H1 (cell line): ENCODE measurements at regions of chr16 and their contacts with region 1.

Region 1: GRCh38 chr16:86519649-86520316 is 9.5 kb downstream of the FOXF1 start:
- DNase-seq: peak in 1 of 2 experiments; percentile 87
- H3K4me3 ChIP-seq: no peak overlapping the region
- H3K27ac ChIP-seq: no peak overlapping the region
- H3K4me1 ChIP-seq: peaks cover 3 to 9% (median 5%) of the 10 kb centered on the region in 4 experiments; a peak in 6 of 7 replicates
- H3K27me3 ChIP-seq: peaks cover 41 to 55% (median 47%) of the 10 kb centered on the region in 4 experiments
- CTCF ChIP-seq: peak; percentile 79 to 88 (median 83)
- EP300 ChIP-seq: no peak
- POLR2A ChIP-seq: no peak
- RAD21 ChIP-seq: peak; percentile 86 to 90

Region 2: DNA sequence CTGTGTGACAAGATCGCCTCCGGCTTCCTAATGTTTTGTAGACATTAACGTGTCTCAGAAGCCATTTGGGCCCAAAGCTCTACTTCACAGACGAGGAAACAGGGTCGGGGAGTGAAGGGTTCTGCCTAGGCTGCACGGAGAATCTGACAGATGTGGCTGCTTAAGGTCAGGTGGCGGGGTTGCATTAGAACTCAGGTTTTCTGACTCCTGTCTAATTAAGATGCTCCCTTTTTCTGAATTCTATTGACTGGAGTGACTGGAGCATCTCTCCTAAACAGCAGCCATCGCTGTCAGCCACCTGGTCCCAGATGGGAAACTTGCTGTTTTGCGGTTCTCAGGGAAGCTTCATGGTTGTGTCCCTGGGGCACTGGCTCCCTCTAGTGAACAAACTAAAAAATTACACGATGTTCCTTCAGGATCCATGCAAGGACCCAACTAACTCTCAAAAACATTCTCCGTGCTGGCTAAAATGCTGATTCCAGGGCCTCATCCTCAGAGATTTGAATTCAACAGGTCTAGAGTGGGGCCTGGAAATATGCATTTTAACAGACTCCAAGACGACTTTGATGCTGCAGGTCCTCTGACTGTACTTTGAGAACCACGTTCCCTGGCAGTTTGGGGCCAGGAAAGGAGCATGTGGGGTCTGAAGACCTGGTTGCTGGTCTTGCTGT is 503.4 kb before region 1 on chr16:
- CTCF ChIA-PET with region 1: interaction called, 14 read pairs
- POLR2A ChIA-PET with region 1: no interaction called
- DNase-seq: peak; percentile 17 to 55
- H3K4me3 ChIP-seq: no peak overlapping the region
- H3K27ac ChIP-seq: no peak overlapping the region
- H3K4me1 ChIP-seq: no peaks in the 10 kb centered on the region
- H3K27me3 ChIP-seq: no peaks in the 10 kb centered on the region; a peak in 3 of 7 replicates
- CTCF ChIP-seq: peak; percentile 37 to 86 (median 80)
- EP300 ChIP-seq: no peak
- POLR2A ChIP-seq: no peak
- RAD21 ChIP-seq: peak; percentile 94 to 96

Region 3: GRCh38 chr16:86044241-86044671 is 475.5 kb before region 1 on chr16:
- CTCF ChIA-PET with region 1: interaction called, 84 read pairs
- POLR2A ChIA-PET with region 1: no interaction called
- DNase-seq: peak; percentile 46 to 93
- H3K4me3 ChIP-seq: no peak overlapping the region
- H3K27ac ChIP-seq: no peak overlapping the region
- H3K4me1 ChIP-seq: peaks cover 0 to 1% (median 0%) of the 10 kb centered on the region in 4 experiments; a peak in 1 of 7 replicates
- H3K27me3 ChIP-seq: no peaks in the 10 kb centered on the region; a peak in 1 of 7 replicates
- CTCF ChIP-seq: peak; percentile 87 to 97 (median 94)
- EP300 ChIP-seq: no peak
- POLR2A ChIP-seq: no peak
- RAD21 ChIP-seq: peak; percentile 71 to 78

Region 4: DNA sequence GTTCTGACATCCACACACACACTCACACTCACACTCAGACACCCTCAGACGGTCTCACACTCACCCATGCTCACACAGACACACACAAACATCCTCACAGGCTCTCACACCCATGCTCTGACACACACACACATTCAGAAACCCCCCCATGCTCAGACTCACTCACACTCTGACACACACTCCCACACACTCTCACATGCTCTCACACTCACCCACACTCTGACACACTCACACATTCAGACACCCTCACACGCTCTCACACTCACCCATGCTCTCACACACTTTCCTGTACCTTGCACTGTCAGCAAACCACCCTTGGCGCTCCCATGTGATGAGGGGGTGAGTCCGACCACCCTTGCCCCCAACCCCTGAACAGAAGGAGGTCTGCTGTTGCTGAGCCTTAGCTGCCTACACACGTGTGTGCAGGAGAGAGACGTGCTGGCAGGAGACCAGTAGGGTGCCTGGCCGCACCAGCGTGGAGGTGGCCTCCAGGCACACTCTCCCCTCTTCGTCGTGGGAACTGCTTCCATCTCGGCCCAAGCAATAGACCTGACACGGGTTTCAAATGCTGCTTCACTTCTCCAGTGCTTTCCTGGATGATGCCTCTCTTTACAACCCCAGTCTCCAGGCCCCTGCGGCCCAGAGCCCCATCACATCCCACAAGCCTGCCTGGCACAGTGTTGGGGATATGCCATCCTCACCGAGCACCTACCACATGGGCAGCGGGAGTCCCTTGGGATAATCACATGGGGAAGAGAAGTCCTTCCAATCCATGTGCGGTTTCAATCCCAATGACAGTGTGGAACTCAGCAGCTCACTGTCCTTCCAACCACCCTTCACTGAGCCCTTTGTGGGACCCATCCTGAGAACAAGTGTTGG is 277.3 kb before region 1 on chr16:
- CTCF ChIA-PET with region 1: interaction called, 14 read pairs
- POLR2A ChIA-PET with region 1: no interaction called
- DNase-seq: peak in 1 of 2 experiments; percentile 40
- H3K4me3 ChIP-seq: no peak overlapping the region
- H3K27ac ChIP-seq: no peak overlapping the region
- H3K4me1 ChIP-seq: peaks cover 0 to 15% (median 6%) of the 10 kb centered on the region in 4 experiments; a peak in 6 of 7 replicates
- H3K27me3 ChIP-seq: peaks cover 0 to 2% (median 0%) of the 10 kb centered on the region in 4 experiments; a peak in 1 of 7 replicates
- CTCF ChIP-seq: no peak
- EP300 ChIP-seq: no peak
- POLR2A ChIP-seq: no peak
- RAD21 ChIP-seq: no peak

Region 5: DNA sequence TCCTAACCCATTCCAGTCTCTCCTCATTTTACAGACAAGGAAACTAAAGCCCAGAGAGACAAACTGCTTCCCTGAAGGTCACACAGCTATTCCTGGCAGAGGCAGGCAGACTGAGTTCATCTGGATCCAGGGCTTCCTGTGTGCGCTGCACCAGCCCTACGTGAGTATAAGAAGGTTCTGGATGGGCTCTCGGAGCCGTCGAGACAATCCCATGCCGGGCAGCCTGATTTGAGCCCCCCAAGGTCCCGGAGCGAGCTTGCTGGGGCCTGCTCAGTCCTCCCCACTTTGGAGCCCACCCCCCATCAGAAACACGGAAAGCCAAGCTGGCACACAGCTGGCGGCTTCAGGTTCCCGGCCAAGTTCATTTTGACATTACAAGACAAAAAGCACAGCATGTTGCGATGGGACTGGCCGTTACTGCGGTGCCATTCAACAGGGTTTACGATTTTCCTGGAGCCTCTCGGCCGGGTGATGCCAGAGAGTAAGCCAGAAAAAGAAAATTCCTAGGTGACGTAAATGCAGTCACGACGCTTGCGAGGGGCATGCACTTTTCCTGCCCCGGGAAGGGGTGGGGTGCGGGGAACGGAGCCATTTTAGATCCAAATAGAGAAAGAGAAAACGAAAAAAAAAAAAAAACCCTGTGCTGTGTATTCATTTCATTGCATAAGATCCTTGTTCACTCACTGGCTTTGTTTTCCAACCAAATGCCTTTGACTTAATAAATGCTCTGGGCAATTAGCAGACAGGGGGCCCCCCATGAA is 176.6 kb before region 1 on chr16:
- CTCF ChIA-PET with region 1: interaction called, 17 read pairs
- POLR2A ChIA-PET with region 1: no interaction called
- DNase-seq: no peak
- H3K4me3 ChIP-seq: no peak overlapping the region
- H3K27ac ChIP-seq: no peak overlapping the region
- H3K4me1 ChIP-seq: peaks cover 2 to 13% (median 8%) of the 10 kb centered on the region in 4 experiments; a peak in 5 of 7 replicates
- H3K27me3 ChIP-seq: peaks cover 0 to 11% (median 3%) of the 10 kb centered on the region in 4 experiments; a peak in 4 of 7 replicates
- CTCF ChIP-seq: no peak
- EP300 ChIP-seq: no peak
- POLR2A ChIP-seq: no peak
- RAD21 ChIP-seq: no peak

Region 6: DNA sequence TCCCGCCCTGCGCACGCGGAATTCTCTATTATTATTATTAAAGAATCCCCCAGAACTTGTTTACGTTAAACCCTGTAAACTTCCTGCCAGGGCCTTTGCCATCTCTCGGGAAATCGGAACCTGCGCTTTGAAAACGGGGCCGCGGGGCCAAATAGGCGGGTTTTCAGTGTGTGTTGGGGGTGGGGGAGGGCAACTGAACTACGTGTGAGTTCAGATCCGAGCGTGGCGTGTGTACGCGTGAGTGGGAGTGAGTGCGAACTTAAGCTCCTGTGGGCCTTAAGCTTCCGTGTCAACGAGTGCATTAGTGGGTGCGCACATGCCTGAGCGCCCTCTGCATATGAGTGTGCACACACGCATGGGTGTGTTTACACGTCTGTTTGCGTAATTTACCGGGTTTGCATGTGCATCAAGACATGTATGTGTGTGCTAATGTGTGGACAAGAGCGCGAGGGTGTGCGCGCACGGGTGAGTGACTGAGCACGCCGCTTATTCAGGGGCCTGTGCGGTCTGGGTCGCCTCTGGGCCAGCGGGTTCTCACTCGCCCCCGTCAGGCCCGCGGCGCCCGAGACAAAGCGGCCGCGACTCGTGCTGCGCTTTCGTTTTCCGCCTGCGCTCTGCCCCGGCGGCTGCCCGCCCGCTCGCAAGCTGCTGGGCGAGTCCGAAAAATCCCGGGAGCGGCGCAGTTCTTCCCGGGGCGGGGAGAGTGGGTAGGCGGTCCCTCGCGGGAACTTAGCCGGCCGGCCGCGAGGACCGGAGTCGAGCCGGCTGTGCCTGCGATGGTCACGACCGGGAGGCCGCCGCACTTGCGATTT is 10.6 kb before region 1 on chr16:
- CTCF ChIA-PET with region 1: interaction called, 10 read pairs
- POLR2A ChIA-PET with region 1: no interaction called
- DNase-seq: peak in 1 of 2 experiments; percentile 69
- H3K4me3 ChIP-seq: peak overlapping the region; percentile 16 to 60 (median 28); a peak in 7 of 8 replicates
- H3K27ac ChIP-seq: no peak overlapping the region
- H3K4me1 ChIP-seq: peaks cover 0 to 52% (median 28%) of the 10 kb centered on the region in 4 experiments; a peak in 6 of 7 replicates
- H3K27me3 ChIP-seq: peaks cover 94 to 97% (median 97%) of the 10 kb centered on the region in 4 experiments
- CTCF ChIP-seq: no peak
- EP300 ChIP-seq: no peak
- POLR2A ChIP-seq: no peak
- RAD21 ChIP-seq: no peak